ENCODE measurements at regions of chr12 and their contacts with region 1.

Region 1: GRCh38 chr12:67773896-67774295 is 125.4 kb downstream of the DYRK2 start:
- DNase-seq: no peak
- ATAC-seq: no peak
- H3K4me3 ChIP-seq: no peak overlapping the region
- H3K27ac ChIP-seq: no peak overlapping the region
- H3K4me1 ChIP-seq: no peaks in the 10 kb centered on the region
- H3K27me3 ChIP-seq: peaks cover 2% of the 10 kb centered on the region; the same call in 1 of the 2 replicates
- CTCF ChIP-seq: no peak

Region 2: DNA sequence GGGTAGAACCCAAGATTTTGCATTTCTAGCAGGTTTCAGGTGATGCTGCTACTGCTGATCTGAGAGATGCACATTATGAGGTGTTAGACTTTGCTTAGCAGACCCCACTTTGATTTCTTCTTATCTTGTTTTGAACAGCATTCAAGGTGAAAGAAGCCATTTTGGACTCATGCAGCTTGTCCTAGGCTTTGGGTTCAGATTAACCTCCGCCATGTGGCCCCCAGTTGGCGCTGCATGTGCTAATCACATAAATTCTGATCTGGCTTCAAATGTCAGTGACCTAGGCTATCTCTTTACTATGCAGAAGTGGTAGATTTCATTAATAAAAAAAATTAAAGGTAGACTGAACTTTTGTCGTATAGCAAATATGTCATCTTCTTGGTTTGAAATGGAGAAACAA is 215.1 kb before region 1 on chr12:
- CTCF ChIA-PET with region 1: no interaction called
- POLR2A ChIA-PET with region 1: no interaction called
- in situ Hi-C with region 1: no loop called
- intact Hi-C with region 1: no loop called
- DNase-seq: no peak
- ATAC-seq: no peak
- H3K4me3 ChIP-seq: no peak overlapping the region
- H3K27ac ChIP-seq: no peak overlapping the region
- H3K4me1 ChIP-seq: no peaks in the 10 kb centered on the region
- H3K27me3 ChIP-seq: no peaks in the 10 kb centered on the region; the same call in 1 of the 2 replicates
- CTCF ChIP-seq: no peak

Region 3: DNA sequence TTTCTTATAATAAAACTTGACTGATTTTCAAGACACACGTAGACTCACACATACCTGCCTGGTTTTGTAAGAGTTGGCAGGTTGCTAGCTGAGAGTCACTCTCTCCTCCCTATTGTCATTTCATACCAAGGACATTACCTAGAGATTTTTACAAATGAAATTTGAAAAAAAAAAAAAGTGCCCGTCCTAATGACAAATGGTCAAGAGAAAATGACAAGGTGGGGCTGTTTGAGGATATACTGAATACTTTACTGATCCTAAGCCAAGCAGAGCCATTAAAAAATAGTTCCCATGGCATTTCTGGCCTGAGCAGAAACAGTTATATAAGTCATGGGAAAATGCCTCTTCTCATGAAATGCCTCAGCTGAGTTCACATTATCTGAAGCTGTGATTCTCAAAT is 24.9 kb after region 1 on chr12:
- CTCF ChIA-PET with region 1: interaction called, 11 read pairs
- POLR2A ChIA-PET with region 1: no interaction called
- in situ Hi-C with region 1: no loop called
- intact Hi-C with region 1: no loop called
- DNase-seq: no peak
- ATAC-seq: no peak
- H3K4me3 ChIP-seq: no peak overlapping the region
- H3K27ac ChIP-seq: no peak overlapping the region
- H3K4me1 ChIP-seq: no peaks in the 10 kb centered on the region
- H3K27me3 ChIP-seq: peaks cover 10% of the 10 kb centered on the region
- CTCF ChIP-seq: no peak

Region 4: GRCh38 chr12:67940780-67941243 is 166.9 kb after region 1 on chr12:
- CTCF ChIA-PET with region 1: no interaction called
- POLR2A ChIA-PET with region 1: no interaction called
- in situ Hi-C with region 1: no loop called
- intact Hi-C with region 1: no loop called
- DNase-seq: no peak
- ATAC-seq: no peak
- H3K4me3 ChIP-seq: no peak overlapping the region
- H3K27ac ChIP-seq: no peak overlapping the region
- H3K4me1 ChIP-seq: no peaks in the 10 kb centered on the region
- H3K27me3 ChIP-seq: peaks cover 19% of the 10 kb centered on the region
- CTCF ChIP-seq: no peak